ENCODE measurements at regions of chr11 and their contacts with region 1.

Region 1: GRCh38 chr11:7986768-7987559 is at the start of gene EIF3F:
- DNase-seq: peak; percentile 82 to 98 (median 94)

Region 2: GRCh38 chr11:7098235-7098832 is 888.6 kb before region 1 on chr11:
- intact Hi-C with region 1: loop called (anchors 10 kb)
- DNase-seq: peak in 3 of 42 donors; percentile 8 to 46 (median 10)

Region 3: DNA sequence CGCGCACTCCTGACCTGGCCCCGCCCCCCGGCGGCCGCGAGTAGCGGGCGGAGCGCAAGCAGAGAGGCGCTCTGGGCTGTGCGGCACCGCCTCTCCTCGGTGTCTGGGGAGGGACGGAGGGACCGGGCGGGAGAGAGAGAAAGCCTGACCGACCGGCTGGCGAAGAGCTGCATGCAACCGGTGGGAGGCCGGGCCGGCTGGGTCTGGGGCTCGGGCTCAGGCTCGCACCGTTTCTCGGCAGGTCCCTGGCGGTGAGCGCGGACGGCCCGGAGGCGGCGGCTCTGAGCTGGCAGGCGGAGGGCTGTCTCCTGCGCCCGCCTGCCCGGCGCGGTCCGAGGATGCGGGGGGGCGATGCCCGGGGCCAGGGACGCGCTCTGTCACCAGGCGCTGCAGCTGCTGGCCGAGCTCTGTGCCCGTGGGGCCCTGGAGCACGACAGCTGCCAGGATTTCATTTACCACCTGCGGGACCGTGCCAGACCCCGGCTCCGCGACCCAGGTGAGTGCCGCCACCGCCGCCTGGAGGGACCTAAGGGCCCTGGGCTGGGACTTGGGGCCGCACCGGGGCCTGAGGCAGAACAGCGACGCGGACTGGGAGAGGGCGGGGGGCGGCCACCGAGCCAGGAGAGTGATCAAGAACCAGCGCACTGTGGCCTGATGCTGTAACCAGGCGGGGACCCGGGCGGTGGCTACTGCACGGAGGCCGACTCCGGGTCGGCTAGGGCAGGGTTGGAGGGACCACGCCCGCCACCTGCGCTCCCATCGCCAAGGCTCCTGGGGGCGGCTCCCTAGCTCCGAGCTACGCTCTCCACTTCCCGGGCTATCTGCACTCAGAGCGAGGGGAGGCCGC is 734.9 kb before region 1 on chr11 and contains the start of gene SYT9:
- intact Hi-C with region 1: loop called (anchors 10 kb)
- DNase-seq: peak; percentile 35 to 89 (median 78)

Region 4: GRCh38 chr11:7892840-7893254 is 94.1 kb before region 1 on chr11:
- intact Hi-C with region 1: loop called (anchors 5 kb)
- DNase-seq: peak in 3 of 42 donors; percentile 3 to 38 (median 8)